Activated CD4-positive, alpha-beta memory T cell treated with anti-CD3 and anti-CD28 coated beads, Interleukin-2, amount 10 ng/mL, durations not matched to agents 7 days and 5 days (primary cell): ENCODE measurements at regions of chr20 and their contacts with region 1.

Region 1: GRCh38 chr20:62642040-62642665 is at the start of gene SLCO4A1:
- DNase-seq: peak; percentile 91
- H3K4me3 Mint-ChIP-seq: peak within 1 kb of the TSS; percentile 83
- H3K27ac Mint-ChIP-seq: peak within 1 kb of the TSS; percentile 71
- H3K4me1 Mint-ChIP-seq: peaks cover 42% of the 10 kb centered on the region
- H3K27me3 Mint-ChIP-seq: peaks cover 5% of the 10 kb centered on the region
- total RNA-seq, gene SLCO4A1: 51.5 to 51.7 TPM

Region 2: DNA sequence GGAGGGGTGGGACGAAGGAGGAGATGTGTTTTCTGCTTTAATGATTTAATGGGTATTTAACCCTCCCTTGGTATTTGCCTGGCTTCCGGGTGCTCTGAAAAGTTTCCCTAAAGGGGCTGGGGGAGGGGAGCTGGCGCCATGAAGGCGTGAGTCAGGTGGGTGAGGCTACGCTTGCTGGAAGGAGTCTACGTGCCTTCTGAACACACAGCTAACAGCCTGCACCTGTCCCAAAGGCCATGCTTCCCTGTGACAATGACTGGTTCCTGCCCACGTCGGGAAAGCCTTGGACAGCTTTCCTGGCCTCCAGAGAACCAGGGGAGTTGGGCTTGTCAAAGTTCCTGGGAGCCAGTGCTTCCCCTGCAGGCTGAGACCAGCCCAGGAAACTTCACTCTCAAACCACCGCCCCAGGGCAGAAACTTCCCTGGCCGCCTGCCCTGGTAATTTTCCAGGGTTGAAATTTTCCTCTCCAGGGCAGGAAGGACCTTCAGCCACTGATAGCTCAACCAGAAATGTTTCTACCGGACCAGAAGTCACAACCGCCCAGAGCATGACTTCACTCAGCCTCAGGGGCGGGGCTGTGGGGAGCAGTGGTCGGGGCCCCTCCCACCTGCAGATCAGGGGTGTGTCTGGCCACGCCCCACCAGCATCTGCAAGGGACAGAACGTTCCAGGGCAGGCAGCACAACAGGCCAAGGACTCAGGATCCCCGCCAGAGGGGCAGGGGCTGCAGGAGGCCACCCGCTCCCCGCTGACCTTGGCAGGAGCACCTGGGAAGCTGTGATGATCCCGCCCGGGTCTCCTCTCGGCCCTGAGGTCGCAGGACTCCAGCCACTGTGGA is 18.4 kb before region 1 on chr20:
- CTCF ChIA-PET with region 1: interaction called, 28 read pairs
- POLR2A ChIA-PET with region 1: interaction called, 44 read pairs
- DNase-seq: peak; percentile 96
- H3K4me3 Mint-ChIP-seq: peak overlapping the region; percentile 65
- H3K27ac Mint-ChIP-seq: peak overlapping the region; percentile 97
- H3K4me1 Mint-ChIP-seq: peaks cover 48% of the 10 kb centered on the region
- H3K27me3 Mint-ChIP-seq: no peaks in the 10 kb centered on the region

Region 3: DNA sequence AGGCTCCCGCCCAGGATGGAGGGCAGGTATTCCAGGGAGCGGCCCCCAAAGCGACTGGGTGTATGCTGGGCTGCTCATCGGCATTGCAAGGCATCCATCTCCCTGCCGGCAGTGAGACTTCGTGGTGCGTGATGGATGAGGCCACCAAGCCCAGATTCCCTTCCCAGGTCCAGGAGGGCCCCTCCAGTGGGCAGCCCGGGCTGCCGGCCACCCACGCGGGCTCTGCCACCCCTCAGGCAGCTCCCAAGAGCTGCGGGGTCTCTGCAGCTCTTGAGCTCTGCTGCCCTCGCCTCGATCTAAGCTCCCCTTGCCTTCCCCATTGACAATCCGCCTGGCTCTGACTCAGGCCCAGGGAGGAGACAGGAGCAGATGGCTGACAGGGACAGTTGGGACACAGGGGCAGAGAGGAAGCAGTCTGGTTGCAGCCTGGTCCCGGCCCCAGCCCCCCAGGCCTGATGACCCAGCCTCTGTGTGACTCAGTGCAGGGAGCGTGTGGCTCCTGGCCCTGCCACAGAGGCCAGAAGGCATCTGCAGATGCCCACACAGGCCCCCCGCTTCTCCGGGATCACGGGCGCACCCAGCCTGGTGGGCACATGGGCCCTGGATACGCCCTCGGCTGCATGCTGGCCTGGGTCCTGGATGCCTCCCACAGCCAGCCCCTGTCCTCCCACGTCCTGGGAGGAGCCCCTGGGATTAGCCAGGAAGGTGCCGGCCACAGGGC is 33.2 kb after region 1 on chr20:
- CTCF ChIA-PET with region 1: no interaction called
- POLR2A ChIA-PET with region 1: no interaction called
- DNase-seq: no peak
- H3K4me3 Mint-ChIP-seq: no peak overlapping the region
- H3K27ac Mint-ChIP-seq: no peak overlapping the region
- H3K4me1 Mint-ChIP-seq: peaks cover 12% of the 10 kb centered on the region
- H3K27me3 Mint-ChIP-seq: no peaks in the 10 kb centered on the region

Region 4: DNA sequence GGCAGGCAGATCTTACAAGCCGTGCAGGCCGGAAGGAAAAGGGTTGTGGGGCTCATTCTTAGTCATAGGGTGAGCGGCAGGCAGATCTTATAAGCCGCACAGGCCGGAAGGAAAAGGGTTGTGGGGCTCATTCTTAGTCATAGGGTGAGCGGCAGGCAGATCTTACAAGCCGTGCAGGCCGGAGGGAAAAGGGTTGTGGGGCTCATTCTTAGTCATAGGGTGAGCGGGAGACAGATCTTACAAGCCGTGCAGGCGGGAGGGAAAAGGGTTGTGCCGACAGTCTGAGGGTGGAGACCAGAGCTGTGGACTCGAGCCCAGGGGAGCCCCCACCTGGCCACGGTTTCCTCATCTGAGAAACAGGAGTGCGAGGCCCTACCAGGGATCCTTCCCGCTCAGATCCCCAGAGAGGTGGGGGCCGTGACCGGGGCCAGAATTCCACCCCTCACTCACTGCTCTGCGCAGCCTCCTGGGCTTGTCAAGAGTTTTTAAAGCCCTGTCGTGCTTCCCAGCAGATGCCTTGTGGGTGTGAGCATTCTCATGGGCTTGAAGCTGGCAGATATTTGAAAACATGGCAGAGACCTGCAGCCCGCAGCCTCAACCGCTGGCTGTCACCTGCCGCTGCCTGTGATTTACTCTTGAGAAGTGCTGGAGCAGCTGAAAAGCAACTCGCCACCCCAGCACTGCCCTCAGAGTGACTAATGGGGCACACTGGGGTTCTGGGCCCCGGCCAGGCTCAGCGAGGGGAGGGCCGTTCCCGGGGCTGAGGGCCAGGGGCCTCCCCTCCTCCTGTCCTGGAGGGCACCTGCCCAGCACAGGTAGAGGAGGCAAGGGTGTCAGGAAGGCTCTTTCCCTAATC is 98.4 kb after region 1 on chr20:
- CTCF ChIA-PET with region 1: interaction called, 5 read pairs
- POLR2A ChIA-PET with region 1: interaction called, 15 read pairs
- DNase-seq: peak; percentile 95
- H3K4me3 Mint-ChIP-seq: peak overlapping the region; percentile 63
- H3K27ac Mint-ChIP-seq: peak overlapping the region; percentile 95
- H3K4me1 Mint-ChIP-seq: peaks cover 56% of the 10 kb centered on the region
- H3K27me3 Mint-ChIP-seq: peaks cover 27% of the 10 kb centered on the region